SK-MEL-5 (cell line): ENCODE measurements at regions of chr6 and their contacts with region 1.

Region 1: GRCh38 chr6:8389036-8389818 is 46.1 kb downstream of the SLC35B3 start:
- DNase-seq: no peak

Region 2: DNA sequence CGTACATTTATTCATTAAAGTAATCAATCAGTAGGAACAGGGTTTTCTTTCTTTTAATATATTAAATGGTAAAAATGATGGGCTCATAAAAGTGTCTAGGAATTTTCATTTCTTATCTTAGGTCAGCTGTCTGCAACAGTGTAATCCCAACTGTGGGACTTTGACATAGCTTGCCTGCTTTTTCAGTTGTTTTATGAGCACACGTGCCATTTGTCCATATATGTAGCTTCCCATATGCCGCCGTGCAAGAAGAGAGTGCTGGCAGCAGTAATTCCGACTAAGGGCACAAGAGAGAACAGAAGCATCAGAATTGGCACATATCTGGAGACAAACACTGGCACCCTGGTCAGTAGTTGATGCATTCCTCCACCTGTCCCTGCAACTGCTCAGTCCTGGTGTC is 266.0 kb before region 1 on chr6:
- in situ Hi-C with region 1: loop called (anchors 10 kb)
- DNase-seq: no peak